ENCODE measurements at regions of chr3 and their contacts with region 1.

Region 1: GRCh38 chr3:159964166-159964973 is 24.3 kb upstream of the IL12A start:
- DNase-seq: no peak
- H3K4me3 ChIP-seq: no peak overlapping the region
- H3K27ac ChIP-seq: no peak overlapping the region
- H3K4me1 ChIP-seq: no peaks in the 10 kb centered on the region
- H3K27me3 ChIP-seq: no peaks in the 10 kb centered on the region
- CTCF ChIP-seq: no peak

Region 2: DNA sequence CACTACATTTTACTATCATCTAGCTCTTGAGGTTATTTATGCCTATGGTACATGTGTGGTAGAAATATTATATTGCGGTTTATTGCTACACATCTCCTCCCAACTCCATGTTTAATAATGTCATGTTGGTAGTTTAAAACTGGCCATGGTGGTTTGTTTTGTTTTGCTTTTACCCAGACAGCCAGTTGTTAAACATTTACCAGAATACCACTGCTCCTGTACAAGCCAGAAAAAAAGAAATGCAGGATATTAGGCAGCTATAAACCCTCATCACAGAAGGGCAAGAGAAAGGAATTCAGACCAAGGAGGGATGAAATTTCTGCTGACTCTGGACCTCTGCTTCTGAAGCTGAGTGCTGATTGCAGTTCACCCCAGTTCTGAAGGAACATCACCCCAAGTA is 427.5 kb before region 1 on chr3:
- intact Hi-C with region 1: no loop called
- DNase-seq: no peak
- H3K4me3 ChIP-seq: no peak overlapping the region
- H3K27ac ChIP-seq: no peak overlapping the region
- H3K4me1 ChIP-seq: no peaks in the 10 kb centered on the region
- H3K27me3 ChIP-seq: no peaks in the 10 kb centered on the region
- CTCF ChIP-seq: no peak

Region 3: DNA sequence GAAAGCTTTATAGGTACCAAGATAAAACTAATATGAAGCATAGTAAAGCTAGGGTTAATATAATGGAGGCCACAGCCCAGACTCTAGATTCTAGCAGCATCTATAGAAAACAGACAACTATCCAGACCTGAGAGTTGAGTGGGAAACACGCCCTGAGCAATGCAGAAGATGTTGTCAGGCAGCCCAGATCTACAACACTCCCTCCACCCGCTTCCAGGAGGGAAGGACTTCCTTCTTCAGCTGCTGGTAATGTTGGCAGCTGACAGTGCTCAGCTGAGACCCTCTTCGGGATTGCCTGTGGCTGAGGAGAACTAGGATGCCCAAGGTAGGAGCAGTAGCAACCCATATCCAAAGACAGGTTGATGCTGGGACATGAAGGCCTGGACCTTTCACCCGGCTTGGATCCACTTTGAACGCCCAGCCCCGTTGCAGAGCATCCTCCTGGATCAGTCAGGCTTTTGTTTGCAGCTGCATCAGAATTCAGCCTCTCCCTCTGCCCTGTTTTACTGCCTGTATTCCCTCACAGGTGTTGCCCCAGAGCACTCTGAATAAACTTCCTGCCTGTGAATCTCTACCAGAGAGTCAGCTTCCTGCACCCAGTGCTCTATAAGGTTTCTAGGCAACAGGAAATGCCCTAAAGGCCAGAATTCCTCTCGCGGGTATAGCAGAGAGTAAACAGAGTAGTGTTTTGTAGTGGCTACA is 150.4 kb before region 1 on chr3:
- intact Hi-C with region 1: no loop called
- DNase-seq: no peak
- H3K4me3 ChIP-seq: no peak overlapping the region
- H3K27ac ChIP-seq: no peak overlapping the region
- H3K4me1 ChIP-seq: peaks cover 0 to 9% of the 10 kb centered on the region in 2 donors
- H3K27me3 ChIP-seq: no peaks in the 10 kb centered on the region
- CTCF ChIP-seq: no peak

Region 4: DNA sequence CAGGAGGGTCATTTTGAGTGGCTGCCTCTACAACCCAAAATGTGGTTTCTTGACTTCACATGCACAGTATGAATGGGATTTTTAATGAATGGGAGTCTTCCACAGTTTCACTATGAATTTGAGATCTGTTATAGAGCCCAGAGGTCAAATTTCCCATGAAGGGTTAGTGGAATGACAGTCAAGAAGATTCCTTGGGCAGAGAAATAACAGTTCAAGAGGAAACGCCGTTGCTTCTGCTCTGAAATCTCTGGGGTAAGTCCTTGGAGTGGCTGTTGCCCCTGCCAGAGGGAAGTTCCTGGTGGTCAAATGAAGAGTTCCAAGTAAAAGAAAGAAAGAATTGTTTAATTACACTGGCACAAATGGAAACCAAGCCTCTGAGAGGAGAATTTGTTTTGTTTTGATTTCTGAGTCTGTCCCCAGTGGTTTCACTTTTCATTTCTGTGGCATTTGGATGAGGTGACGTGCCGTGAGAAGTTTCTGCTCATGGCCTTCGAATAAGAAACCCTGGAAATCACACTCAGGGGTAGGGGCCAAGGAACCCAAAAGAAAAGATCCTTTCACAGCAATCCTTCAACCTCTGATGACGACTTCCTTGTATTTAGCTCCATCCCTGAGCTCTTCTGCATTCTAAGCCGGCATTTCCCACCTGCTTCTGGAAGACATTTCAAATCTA is 53.2 kb before region 1 on chr3:
- intact Hi-C with region 1: loop called (anchors 1 kb)
- DNase-seq: no peak
- H3K4me3 ChIP-seq: peak overlapping the region; percentile 42 to 58
- H3K27ac ChIP-seq: peak overlapping the region; percentile 63 to 68
- H3K4me1 ChIP-seq: peaks cover 0 to 7% of the 10 kb centered on the region in 2 donors
- H3K27me3 ChIP-seq: no peaks in the 10 kb centered on the region
- CTCF ChIP-seq: no peak

Region 5: DNA sequence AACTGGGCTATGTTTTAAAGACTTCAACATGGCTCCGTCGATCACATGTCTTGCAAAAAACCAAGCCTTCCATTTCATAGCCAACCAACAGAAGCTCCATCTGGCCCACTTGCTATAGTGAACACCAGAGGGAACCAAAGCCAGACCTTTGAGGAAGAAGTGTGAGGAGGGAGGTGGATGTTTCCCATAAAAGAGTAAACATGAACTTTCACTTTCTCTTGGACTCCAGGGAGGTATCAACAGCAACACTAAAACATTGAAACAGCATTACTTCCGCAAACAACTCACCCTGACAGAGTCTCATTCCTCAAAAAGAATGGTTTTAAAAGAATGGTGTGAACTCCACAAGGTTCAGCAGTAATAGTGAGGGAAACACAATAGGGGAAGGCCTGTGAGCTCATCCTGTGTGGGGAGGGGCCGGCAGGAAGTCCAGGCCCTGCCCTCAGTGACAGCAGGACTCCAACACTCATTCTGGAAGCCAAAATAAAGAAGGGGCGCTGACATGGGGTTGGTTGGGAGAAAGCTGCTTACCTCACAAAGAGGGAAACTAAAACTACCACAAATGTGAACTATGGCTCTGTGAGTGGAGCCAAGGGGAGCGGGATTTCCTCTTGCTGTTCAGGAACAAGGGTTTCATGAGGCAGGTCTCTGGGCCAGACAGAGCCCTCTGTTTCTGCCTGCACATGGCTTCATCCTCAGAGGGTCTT is 34.8 kb before region 1 on chr3:
- intact Hi-C with region 1: no loop called
- DNase-seq: no peak
- H3K4me3 ChIP-seq: no peak overlapping the region
- H3K27ac ChIP-seq: peak overlapping the region; percentile 21 to 65
- H3K4me1 ChIP-seq: peaks cover 0 to 6% of the 10 kb centered on the region in 2 donors
- H3K27me3 ChIP-seq: no peaks in the 10 kb centered on the region
- CTCF ChIP-seq: no peak